Sigmoid colon (tissue), 7 donors: ENCODE measurements at regions of chr22 and their contacts with region 1.

Region 1: DNA sequence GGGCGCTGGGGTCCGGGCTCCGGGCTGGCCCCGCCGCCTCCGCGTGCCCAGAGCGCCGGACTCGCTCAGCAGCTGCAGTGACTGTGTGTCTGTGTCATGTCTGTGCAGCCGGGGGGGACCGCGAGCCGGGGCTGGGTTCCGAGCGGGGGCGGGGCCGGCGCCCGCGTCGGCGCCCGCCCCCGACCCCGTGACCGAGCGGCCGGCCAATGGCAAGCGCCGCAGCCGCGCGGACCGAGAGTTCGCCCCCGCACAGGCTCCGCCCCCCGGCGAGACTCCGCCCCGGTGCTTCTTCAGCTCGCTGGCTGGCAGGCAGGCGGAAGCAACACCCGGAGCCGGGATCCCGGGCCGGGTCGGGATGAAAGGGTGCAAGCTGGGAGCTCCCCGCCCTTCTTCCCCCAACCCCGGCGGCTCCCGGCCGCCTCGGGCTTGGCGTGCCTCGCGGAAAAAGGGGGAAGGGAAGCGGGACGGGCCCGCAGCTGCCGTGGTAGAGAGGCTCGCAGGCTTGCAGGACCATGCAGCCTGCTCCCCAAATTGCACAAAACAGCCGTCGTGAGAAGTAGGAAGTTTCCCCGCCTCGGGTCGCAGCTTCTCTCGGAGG is 750 bp upstream of the LARGE1 start:
- DNase-seq: peak; percentile 99
- H3K4me3 ChIP-seq: peak overlapping the region; percentile 60 to 99 (median 88)
- H3K27ac ChIP-seq: peak overlapping the region; percentile 86 to 94 (median 90)
- H3K4me1 ChIP-seq: peaks cover 3 to 45% (median 40%) of the 10 kb centered on the region in 4 donors
- H3K27me3 ChIP-seq: no peaks in the 10 kb centered on the region
- CTCF ChIP-seq: no peak
- EP300 ChIP-seq: no peak
- POLR2A ChIP-seq: no peak

Region 2: GRCh38 chr22:33302049-33302545 is 618.9 kb before region 1 on chr22:
- intact Hi-C with region 1: loop called (anchors 5 kb)
- DNase-seq: peak; percentile 87
- H3K4me3 ChIP-seq: peak overlapping the region in 2 of 4 donors; percentile 9 to 14
- H3K27ac ChIP-seq: peak overlapping the region in 1 of 4 donors; percentile 37
- H3K4me1 ChIP-seq: peaks cover 0 to 15% (median 6%) of the 10 kb centered on the region in 4 donors
- H3K27me3 ChIP-seq: no peaks in the 10 kb centered on the region
- CTCF ChIP-seq: peak; percentile 81 to 94 (median 86)
- EP300 ChIP-seq: no peak
- POLR2A ChIP-seq: no peak

Region 3: GRCh38 chr22:33579448-33580093 is 341.5 kb before region 1 on chr22:
- intact Hi-C with region 1: loop called (anchors 10 kb)
- DNase-seq: peak; percentile 73
- H3K4me3 ChIP-seq: no peak overlapping the region
- H3K27ac ChIP-seq: no peak overlapping the region
- H3K4me1 ChIP-seq: peaks cover 0 to 35% (median 28%) of the 10 kb centered on the region in 4 donors
- H3K27me3 ChIP-seq: no peaks in the 10 kb centered on the region
- CTCF ChIP-seq: peak; percentile 57 to 93 (median 85)
- EP300 ChIP-seq: no peak
- POLR2A ChIP-seq: no peak

Region 4: GRCh38 chr22:33726294-33726734 is 194.7 kb before region 1 on chr22:
- intact Hi-C with region 1: loop called (anchors 5 kb)
- DNase-seq: peak; percentile 70
- H3K4me3 ChIP-seq: no peak overlapping the region
- H3K27ac ChIP-seq: peak overlapping the region; percentile 56 to 80 (median 64)
- H3K4me1 ChIP-seq: peaks cover 0 to 44% (median 33%) of the 10 kb centered on the region in 4 donors
- H3K27me3 ChIP-seq: no peaks in the 10 kb centered on the region
- CTCF ChIP-seq: no peak
- EP300 ChIP-seq: peak; percentile 34 to 85 (median 75)
- POLR2A ChIP-seq: no peak

Region 5: DNA sequence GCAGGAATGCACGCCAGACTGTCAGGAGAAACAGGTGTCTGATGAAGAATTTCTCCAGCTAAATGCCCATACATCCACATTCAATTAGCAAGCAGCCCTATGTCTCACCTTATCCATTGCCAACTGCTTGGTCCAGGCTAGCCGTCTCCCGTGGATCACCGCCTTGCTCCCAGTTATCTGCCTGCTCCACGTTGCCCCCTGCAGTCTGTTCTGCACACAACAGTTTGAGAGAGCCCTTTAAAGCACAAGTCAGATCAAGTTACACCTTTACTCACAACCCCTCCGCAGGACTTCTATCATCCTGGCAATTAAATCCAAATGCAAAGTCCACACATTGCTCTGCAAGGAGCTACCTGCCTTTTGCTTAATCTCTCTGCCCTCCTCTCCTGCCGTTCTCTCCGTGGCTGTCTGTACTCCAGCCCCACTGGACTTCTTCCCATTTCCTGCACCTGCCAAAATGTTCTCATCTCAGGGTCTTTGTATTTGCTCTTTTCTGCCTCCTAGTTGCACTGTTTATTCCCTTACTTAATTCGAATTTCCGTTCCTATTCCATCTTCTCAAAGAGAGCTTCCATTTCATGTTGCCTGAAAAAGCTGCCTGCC is 184.5 kb after region 1 on chr22:
- intact Hi-C with region 1: loop called (anchors 2 kb)
- DNase-seq: peak; percentile 76
- H3K4me3 ChIP-seq: no peak overlapping the region
- H3K27ac ChIP-seq: no peak overlapping the region
- H3K4me1 ChIP-seq: no peaks in the 10 kb centered on the region
- H3K27me3 ChIP-seq: no peaks in the 10 kb centered on the region
- CTCF ChIP-seq: peak; percentile 53 to 77 (median 65)
- EP300 ChIP-seq: no peak
- POLR2A ChIP-seq: no peak